ENCODE measurements at regions of chr19 and their contacts with region 1.

Region 1: DNA sequence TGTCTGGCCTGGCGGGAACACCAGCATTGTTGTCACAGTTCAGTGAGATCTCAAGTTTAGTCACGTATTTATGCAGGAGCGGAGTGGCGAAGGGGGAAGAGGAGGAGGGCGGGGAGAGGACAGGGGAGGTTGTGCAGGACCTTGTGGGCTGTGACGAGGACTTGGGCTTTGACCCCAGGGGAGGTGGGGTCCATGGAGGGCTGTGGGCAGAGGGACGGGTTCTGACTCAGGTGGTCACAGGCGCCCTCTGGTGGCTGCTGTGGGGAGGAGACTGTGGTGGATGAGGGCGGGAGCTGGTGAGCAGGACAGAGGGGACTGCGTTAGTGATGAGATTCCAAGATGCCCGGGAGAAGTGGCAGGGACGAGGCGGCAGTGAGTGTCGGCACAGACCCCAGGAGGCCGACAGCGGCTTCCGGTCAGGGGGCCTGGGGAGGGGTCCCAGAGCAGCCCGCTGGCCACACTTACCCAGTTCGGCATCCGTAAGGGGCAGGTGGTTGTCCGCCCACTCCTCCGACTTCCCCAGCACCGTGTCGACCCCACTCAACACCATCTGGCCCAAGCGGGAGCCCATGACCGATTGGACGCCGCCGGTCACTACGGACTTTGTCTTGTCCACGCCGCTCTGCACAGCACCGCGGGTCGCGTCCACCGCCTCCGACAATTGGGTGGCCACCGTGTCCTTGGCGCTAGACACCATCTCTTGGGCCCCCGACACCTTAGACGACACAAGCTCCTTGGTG is 15.7 kb downstream of the PLIN3 start:
- DNase-seq: peak; percentile 92
- ATAC-seq: peak; percentile 99
- H3K4me3 Mint-ChIP-seq: no peak overlapping the region
- H3K27ac Mint-ChIP-seq: 0 out of 2 replicates have a peak overlapping the region, but pooled peaks have one; percentile 49
- H3K4me1 Mint-ChIP-seq: no peaks in the 10 kb centered on the region
- H3K27me3 Mint-ChIP-seq: no peaks in the 10 kb centered on the region
- CTCF ChIP-seq: peak; percentile 92

Region 2: DNA sequence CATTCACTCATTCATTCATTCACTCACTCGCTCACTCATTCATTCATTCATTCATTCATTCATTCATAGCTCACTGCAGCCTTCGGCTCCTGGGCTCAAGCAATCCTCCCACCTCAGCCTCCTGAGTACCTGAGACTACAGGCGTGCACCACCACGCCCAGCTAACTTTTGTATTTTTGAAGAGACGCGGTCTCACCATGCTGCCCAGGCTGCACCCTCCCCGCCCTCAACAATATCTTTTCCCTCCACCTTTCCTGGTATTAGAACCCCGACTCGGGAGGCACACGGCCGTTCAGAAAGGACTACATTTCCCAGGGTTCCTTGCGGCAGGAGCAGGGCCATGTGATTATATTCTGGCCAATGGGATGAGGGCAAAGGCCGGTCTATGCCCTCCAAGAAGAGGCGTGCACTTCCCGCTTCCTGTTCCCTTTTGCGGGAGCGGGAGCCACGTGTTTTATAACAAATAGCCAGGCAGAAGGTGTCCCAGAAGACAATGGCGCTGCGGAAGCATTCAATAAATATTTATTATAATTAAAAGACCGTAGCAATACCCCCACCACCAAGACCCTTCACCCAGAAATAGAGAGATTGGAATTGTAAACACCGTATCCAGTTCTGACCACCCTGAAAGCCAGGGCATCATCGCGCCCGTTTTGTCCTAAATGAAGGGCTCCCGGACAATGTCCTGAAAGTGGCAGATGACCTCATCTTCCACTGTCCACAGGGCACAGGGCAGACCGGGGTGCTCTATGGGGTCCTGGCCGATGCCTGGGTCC is 36.1 kb before region 1 on chr19:
- CTCF ChIA-PET with region 1: interaction called, 161 read pairs
- POLR2A ChIA-PET with region 1: no interaction called
- DNase-seq: peak; percentile 86
- ATAC-seq: peak; percentile 82
- H3K4me3 Mint-ChIP-seq: peak overlapping the region; percentile 58
- H3K27ac Mint-ChIP-seq: no peak overlapping the region
- H3K4me1 Mint-ChIP-seq: peaks cover 2% of the 10 kb centered on the region; the same call in 1 of the 2 replicates
- H3K27me3 Mint-ChIP-seq: peaks cover 25% of the 10 kb centered on the region
- CTCF ChIP-seq: no peak

Region 3: GRCh38 chr19:4831304-4831978 is 20.3 kb before region 1 on chr19 and contains the start of gene TICAM1:
- CTCF ChIA-PET with region 1: interaction called, 14 read pairs
- POLR2A ChIA-PET with region 1: no interaction called
- DNase-seq: no peak
- ATAC-seq: peak; percentile 50
- H3K4me3 Mint-ChIP-seq: peak within 1 kb of the TSS; percentile 62
- H3K27ac Mint-ChIP-seq: no peak within 1 kb of the TSS
- H3K4me1 Mint-ChIP-seq: no peaks in the 10 kb centered on the region
- H3K27me3 Mint-ChIP-seq: peaks cover 29% of the 10 kb centered on the region
- CTCF ChIP-seq: no peak
- total RNA-seq, gene TICAM1: 0.61 to 1.4 TPM (median 1.2 TPM) in 3 replicates

Region 4: DNA sequence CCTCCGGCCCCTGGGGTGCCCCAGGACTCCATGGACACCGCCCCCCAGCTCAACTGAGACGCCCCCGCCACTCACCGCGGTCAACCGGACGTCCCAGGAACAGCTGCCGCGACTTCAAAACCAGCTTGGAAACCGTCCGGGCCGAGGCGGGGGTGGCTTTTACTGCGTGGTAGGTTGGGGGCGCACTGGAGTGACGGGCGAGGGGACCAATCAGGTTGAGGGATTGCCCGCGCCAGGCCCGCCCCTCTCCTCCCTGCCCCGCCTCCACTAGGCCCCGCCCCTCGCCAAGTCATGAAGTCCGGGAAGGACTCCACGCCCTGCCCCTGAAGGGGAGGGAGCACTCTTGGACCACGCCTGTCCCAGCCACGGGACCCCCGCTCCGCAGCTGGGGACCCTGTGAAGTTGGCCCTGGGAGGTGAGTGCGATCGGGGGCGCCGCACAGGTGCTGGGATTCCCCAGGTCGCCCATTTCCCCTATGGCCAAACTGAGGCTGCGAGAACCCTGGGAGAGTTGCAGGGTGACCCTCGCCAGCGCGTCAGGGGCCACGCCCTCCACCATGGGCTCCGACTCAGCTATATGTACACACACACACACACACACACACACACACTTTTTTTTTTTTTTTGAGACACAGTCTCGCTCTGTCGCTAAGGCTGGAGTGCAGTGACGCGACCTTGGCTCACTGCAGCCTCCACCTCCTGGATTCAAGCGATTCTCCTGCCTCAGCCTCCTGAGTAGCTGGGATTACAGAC is 16.0 kb after region 1 on chr19 and contains the start of gene PLIN3:
- CTCF ChIA-PET with region 1: interaction called, 33 read pairs
- POLR2A ChIA-PET with region 1: interaction called, 3 read pairs
- DNase-seq: peak; percentile 96
- ATAC-seq: peak; percentile 95
- H3K4me3 Mint-ChIP-seq: peak within 1 kb of the TSS; percentile 80
- H3K27ac Mint-ChIP-seq: peak within 1 kb of the TSS; percentile 66
- H3K4me1 Mint-ChIP-seq: peaks cover 8% of the 10 kb centered on the region
- H3K27me3 Mint-ChIP-seq: no peaks in the 10 kb centered on the region; the same call in 1 of the 2 replicates
- CTCF ChIP-seq: no peak
- total RNA-seq, gene PLIN3: 61.3 to 72.1 TPM (median 71.2 TPM) in 3 replicates

Region 5: GRCh38 chr19:4909897-4910593 is 58.3 kb after region 1 on chr19:
- CTCF ChIA-PET with region 1: interaction called, 26 read pairs
- POLR2A ChIA-PET with region 1: no interaction called
- DNase-seq: peak; percentile 92
- ATAC-seq: peak; percentile 86
- H3K4me3 Mint-ChIP-seq: peak overlapping the region; percentile 77
- H3K27ac Mint-ChIP-seq: no peak overlapping the region
- H3K4me1 Mint-ChIP-seq: peaks cover 22% of the 10 kb centered on the region
- H3K27me3 Mint-ChIP-seq: peaks cover 28% of the 10 kb centered on the region
- CTCF ChIP-seq: no peak